Adrenal gland (tissue), 19 donors: ENCODE measurements at regions of chr22 and their contacts with region 1.

Region 1: DNA sequence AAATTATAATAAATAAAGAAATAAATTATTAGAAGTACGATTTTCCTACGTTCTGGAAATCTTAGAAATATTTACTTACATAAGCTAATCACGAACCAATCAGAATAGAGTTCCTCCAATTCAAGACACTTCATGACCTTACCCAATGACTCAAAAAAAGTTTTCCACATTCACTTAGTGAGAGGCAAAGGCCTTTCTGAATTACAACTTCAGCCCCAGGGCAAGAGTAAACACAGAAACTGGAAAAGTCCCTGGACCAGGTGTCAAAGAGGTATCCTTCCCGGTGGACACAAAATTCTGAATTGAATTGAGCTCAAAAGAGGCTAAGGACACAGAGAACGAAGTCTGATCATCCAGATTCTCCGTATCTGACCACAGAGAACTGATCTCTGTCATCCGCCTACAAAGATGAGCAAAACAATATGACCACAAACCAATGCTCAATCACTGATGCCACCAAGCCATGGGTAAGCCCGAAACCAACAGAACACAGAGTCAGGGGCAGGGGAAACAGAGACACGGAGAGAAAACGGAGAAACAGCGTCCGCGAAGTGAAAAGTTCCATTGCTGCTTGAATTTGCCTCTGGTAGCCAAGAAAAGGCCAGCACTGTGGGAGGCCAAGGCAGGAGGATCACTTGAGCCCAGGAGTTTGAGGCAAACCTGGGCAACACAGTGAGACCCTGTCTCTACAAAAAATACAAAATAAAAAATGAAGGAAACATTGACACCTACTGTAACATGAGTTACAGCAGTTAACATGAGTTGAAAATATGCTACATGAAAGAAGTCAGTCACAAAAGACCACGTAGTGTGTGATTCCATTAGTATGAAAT is 6.8 kb downstream of the BID start:
- DNase-seq: no peak
- H3K4me3 ChIP-seq: no peak overlapping the region
- H3K27ac ChIP-seq: no peak overlapping the region
- H3K4me1 ChIP-seq: no peaks in the 10 kb centered on the region
- H3K27me3 ChIP-seq: no peaks in the 10 kb centered on the region
- CTCF ChIP-seq: no peak
- POLR2A ChIP-seq: no peak

Region 2: GRCh38 chr22:17807578-17808360 is 40.3 kb after region 1 on chr22:
- intact Hi-C with region 1: no loop called
- DNase-seq: no peak
- H3K4me3 ChIP-seq: no peak overlapping the region
- H3K27ac ChIP-seq: no peak overlapping the region
- H3K4me1 ChIP-seq: no peaks in the 10 kb centered on the region
- H3K27me3 ChIP-seq: no peaks in the 10 kb centered on the region
- CTCF ChIP-seq: no peak
- POLR2A ChIP-seq: no peak

Region 3: DNA sequence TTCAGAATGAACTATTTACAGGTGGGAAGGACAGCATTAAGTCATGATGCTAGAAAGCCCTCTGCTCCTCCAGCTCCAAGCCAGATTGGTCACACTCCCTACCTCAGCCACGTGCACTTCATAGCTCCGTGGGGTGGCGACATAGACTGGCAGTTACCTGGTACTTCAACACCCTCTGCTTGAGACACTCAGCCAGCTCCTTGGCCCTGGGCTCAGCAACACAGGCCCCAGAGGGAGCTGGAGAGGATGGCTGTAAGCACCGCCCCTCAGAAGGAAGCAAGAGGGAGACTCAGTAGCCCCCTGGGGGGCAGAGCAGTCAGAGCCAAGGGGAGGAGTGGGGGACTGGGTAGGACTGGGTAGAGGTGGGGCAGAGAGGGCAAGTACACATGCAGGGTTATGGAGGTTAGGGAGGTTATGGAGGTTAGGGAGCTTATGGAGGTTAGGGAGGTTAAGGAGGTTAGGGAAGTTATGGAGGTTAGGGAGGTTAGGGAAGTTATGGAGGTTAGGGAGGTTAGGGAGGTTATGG is 108.9 kb after region 1 on chr22:
- intact Hi-C with region 1: loop called in 1 of 2 experiments (anchors 10 kb)
- DNase-seq: peak in 1 of 7 donors; percentile 15
- H3K4me3 ChIP-seq: no peak overlapping the region
- H3K27ac ChIP-seq: no peak overlapping the region
- H3K4me1 ChIP-seq: no peaks in the 10 kb centered on the region
- H3K27me3 ChIP-seq: no peaks in the 10 kb centered on the region
- CTCF ChIP-seq: no peak
- POLR2A ChIP-seq: no peak